Ascending aorta (tissue), 2 donors: ENCODE measurements at regions of chr14 and their contacts with region 1.

Region 1: DNA sequence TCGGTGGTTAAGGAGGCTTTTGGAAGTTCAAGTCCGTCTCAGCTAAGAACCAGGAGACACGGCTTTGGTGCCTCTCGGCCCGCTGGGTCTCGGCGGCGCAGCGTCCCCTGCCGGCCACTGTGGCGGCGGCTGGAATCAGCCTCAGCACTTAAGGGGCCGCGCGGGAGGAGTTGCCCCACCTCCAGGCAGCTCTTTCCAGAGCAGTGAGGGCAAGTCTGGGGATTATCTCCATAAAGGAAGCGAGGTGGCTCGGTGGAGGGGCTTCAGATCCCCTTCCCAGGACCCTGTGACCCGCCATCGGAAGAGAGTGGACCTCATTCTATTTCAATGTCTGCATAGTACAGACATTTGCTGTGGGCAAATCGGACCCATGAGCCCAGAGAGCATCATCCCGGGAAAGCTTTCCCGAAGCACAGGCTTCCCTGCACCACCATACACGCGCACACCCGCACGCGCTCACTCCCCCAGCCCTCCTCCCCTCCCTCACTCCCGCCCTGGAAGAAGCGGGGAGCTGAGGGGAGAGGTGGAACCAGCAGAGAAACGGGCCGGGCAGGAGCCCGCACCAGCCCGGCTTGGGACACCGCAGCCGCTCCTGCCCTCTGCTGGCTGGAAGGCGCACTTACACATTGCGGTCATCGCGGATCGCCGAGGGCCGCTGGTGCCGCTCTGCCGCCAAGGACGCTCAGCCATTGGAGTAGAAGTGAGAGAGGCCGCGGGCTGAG is 15.9 kb downstream of the RNASE2 start:
- DNase-seq: peak; percentile 39 to 90
- H3K4me3 ChIP-seq: peak overlapping the region; percentile 58 to 75
- H3K27ac ChIP-seq: peak overlapping the region; percentile 80 to 85
- H3K4me1 ChIP-seq: peaks cover 0 to 5% of the 10 kb centered on the region in 2 donors
- H3K27me3 ChIP-seq: no peaks in the 10 kb centered on the region
- CTCF ChIP-seq: peak; percentile 86 to 93 (median 88)

Region 2: DNA sequence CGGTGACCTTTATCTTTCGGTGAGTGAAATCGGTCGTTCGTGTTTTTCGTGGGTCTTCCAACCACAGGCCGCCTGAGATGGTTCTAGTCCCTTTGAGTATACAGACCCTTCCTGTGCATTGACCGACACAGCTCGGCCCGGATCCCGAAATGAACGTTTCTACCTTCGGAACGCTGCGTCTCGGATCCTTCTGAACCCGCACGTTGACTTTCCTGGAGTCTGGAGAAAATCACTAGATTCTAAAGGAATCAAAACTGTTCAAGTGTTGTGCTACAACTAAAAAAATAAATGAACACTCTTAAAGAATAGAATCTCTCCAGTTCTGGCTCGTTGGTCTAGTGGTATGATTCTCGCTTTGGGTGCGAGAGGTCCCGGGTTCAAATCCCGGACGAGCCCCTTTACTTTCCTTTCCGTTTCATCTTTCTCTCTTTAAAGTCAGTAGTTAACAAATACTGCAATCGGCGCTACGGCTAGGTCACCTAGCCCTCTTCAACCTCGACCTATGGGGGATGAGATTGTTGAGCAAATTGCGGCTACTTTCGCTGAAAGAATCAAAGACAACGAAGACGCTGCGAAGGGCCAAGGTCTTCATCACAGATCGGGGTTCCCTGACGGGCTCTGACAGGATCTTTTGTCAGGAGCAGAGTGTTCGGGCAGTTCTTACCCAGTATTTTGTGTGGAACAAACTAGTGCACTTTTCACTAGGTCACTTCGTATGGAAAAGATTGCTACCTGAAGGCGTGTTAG is 338.3 kb before region 1 on chr14:
- intact Hi-C with region 1: loop called (anchors 5 kb)
- DNase-seq: no peak
- H3K4me3 ChIP-seq: peak overlapping the region; percentile 36 to 58
- H3K27ac ChIP-seq: peak overlapping the region in 1 of 2 donors; percentile 44
- H3K4me1 ChIP-seq: peaks cover 4 to 12% of the 10 kb centered on the region in 2 donors
- H3K27me3 ChIP-seq: no peaks in the 10 kb centered on the region
- CTCF ChIP-seq: no peak